CD8-positive, alpha-beta T cell (primary cell): ENCODE measurements at regions of chr17 and their contacts with region 1.

Region 1: GRCh38 chr17:30824356-30825145 is at the start of gene CRLF3:
- DNase-seq: peak; percentile 80 to 96 (median 88)
- ATAC-seq: peak; percentile 90
- H3K4me3 ChIP-seq: peak within 1 kb of the TSS; percentile 82 to 96
- H3K4me3 Mint-ChIP-seq: peak within 1 kb of the TSS; percentile 92
- H3K27ac ChIP-seq: peak within 1 kb of the TSS; percentile 79 to 87
- H3K27ac Mint-ChIP-seq: peak within 1 kb of the TSS; percentile 88
- H3K4me1 ChIP-seq: peaks cover 42% of the 10 kb centered on the region
- H3K4me1 Mint-ChIP-seq: peaks cover 42% of the 10 kb centered on the region
- H3K27me3 ChIP-seq: no peaks in the 10 kb centered on the region
- H3K27me3 Mint-ChIP-seq: no peaks in the 10 kb centered on the region
- CTCF ChIP-seq: peak; percentile 62
- total RNA-seq, gene CRLF3: 60.5 to 60.7 TPM

Region 2: GRCh38 chr17:30116661-30117551 is 707.6 kb before region 1 on chr17 and contains the start of gene NSRP1:
- CTCF ChIA-PET with region 1: no interaction called
- POLR2A ChIA-PET with region 1: no interaction called
- intact Hi-C with region 1: loop called in 1 of 2 experiments (anchors 10 kb)
- DNase-seq: peak; percentile 83 to 96 (median 92)
- ATAC-seq: peak; percentile 97
- H3K4me3 ChIP-seq: peak within 1 kb of the TSS; percentile 66 to 96
- H3K4me3 Mint-ChIP-seq: peak within 1 kb of the TSS; percentile 100
- H3K27ac ChIP-seq: peak within 1 kb of the TSS; percentile 95 to 99
- H3K27ac Mint-ChIP-seq: peak within 1 kb of the TSS; percentile 100
- H3K4me1 ChIP-seq: peaks cover 16% of the 10 kb centered on the region
- H3K4me1 Mint-ChIP-seq: peaks cover 41% of the 10 kb centered on the region
- H3K27me3 ChIP-seq: no peaks in the 10 kb centered on the region
- H3K27me3 Mint-ChIP-seq: no peaks in the 10 kb centered on the region
- CTCF ChIP-seq: no peak
- total RNA-seq, gene NSRP1: 22.4 to 23.1 TPM

Region 3: DNA sequence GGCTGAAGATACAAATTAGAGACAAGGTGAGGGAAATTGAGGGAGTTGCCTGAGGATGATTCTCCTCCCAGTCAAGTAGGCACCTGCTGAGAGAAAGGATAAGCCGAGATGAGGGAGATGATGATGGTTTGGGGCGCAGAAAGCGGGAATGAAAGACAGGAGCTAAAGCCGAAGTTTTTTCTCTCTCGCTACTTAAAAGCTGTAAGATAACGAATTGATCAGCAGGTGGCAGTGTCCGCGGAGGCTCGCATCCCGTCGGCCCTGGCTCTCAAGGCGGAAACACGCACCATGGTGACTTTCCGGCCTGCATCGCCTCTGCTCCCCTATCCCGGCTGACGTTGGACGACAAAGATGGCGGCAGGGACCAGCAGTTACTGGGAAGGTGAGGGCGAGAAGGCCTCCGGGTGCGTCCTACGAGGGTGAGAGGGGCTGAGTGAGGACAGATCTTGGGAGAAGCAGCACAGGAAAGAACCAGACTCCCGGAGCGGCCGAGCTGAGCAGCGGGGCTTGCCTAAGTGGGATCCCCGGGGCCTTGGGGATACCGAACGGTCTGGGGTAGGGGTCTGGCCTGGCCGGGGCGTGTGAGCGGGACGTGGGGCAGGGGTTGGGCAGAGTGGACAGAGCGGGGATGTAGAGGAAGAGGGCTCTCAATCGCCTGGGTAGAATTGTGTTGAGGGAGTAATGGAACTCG is 347.3 kb before region 1 on chr17 and contains the start of gene GOSR1:
- CTCF ChIA-PET with region 1: interaction called, 3 read pairs
- POLR2A ChIA-PET with region 1: no interaction called
- intact Hi-C with region 1: loop called in 1 of 2 experiments (anchors 1 kb)
- DNase-seq: peak; percentile 82 to 97 (median 92)
- ATAC-seq: peak; percentile 97
- H3K4me3 ChIP-seq: peak within 1 kb of the TSS; percentile 65 to 68
- H3K4me3 Mint-ChIP-seq: peak within 1 kb of the TSS; percentile 99
- H3K27ac ChIP-seq: peak within 1 kb of the TSS; percentile 92 to 93
- H3K27ac Mint-ChIP-seq: peak within 1 kb of the TSS; percentile 99
- H3K4me1 ChIP-seq: peaks cover 23% of the 10 kb centered on the region
- H3K4me1 Mint-ChIP-seq: peaks cover 45% of the 10 kb centered on the region
- H3K27me3 ChIP-seq: no peaks in the 10 kb centered on the region
- H3K27me3 Mint-ChIP-seq: peaks cover 4% of the 10 kb centered on the region
- CTCF ChIP-seq: peak; percentile 72
- total RNA-seq, gene GOSR1: 45.2 to 48.0 TPM

Region 4: DNA sequence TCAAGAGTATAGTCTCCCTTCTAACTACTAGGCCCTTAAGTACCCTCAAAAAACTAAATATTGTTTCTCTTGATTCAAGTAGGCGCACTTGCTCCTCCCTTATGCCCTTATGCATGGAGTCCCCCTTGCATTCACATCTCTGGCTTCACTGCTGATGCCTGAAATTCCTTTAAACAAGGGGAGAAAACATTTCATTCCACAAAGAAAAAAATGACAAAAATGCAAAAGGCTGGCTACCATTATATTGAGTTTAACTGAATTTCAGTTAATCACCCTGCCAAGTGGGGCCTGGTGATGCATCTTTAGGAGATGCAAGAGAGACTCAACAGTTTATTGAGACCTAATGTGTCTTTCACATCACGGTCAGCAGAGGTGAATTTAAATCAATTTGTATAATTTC is 35.6 kb before region 1 on chr17:
- CTCF ChIA-PET with region 1: interaction called, 10 read pairs
- POLR2A ChIA-PET with region 1: interaction called, 6 read pairs
- intact Hi-C with region 1: loop called (anchors 5 kb)
- DNase-seq: no peak
- ATAC-seq: no peak
- H3K4me3 ChIP-seq: no peak overlapping the region
- H3K4me3 Mint-ChIP-seq: no peak overlapping the region
- H3K27ac ChIP-seq: no peak overlapping the region
- H3K27ac Mint-ChIP-seq: peak overlapping the region; percentile 33
- H3K4me1 ChIP-seq: no peaks in the 10 kb centered on the region
- H3K4me1 Mint-ChIP-seq: peaks cover 12% of the 10 kb centered on the region
- H3K27me3 ChIP-seq: no peaks in the 10 kb centered on the region
- H3K27me3 Mint-ChIP-seq: no peaks in the 10 kb centered on the region
- CTCF ChIP-seq: no peak

Region 5: GRCh38 chr17:30808785-30809286 is 15.7 kb before region 1 on chr17:
- CTCF ChIA-PET with region 1: interaction called, 220 read pairs
- POLR2A ChIA-PET with region 1: interaction called, 168 read pairs
- intact Hi-C with region 1: loop called (anchors 1 kb)
- DNase-seq: peak in 8 of 9 experiments; percentile 1 to 88 (median 48)
- ATAC-seq: peak; percentile 85
- H3K4me3 ChIP-seq: peak overlapping the region; percentile 26 to 48
- H3K4me3 Mint-ChIP-seq: peak overlapping the region; percentile 83
- H3K27ac ChIP-seq: peak overlapping the region; percentile 53 to 89
- H3K27ac Mint-ChIP-seq: peak overlapping the region; percentile 99
- H3K4me1 ChIP-seq: peaks cover 63% of the 10 kb centered on the region
- H3K4me1 Mint-ChIP-seq: peaks cover 70% of the 10 kb centered on the region
- H3K27me3 ChIP-seq: no peaks in the 10 kb centered on the region
- H3K27me3 Mint-ChIP-seq: no peaks in the 10 kb centered on the region
- CTCF ChIP-seq: no peak

Region 6: GRCh38 chr17:31313982-31314784 is 489.6 kb after region 1 on chr17 and contains the start of gene EVI2B:
- CTCF ChIA-PET with region 1: no interaction called
- POLR2A ChIA-PET with region 1: no interaction called
- intact Hi-C with region 1: loop called in 1 of 2 experiments (anchors 5 kb)
- DNase-seq: peak in 3 of 9 experiments; percentile 29 to 75 (median 59)
- ATAC-seq: peak; percentile 44
- H3K4me3 ChIP-seq: peak within 1 kb of the TSS; percentile 59 to 67
- H3K4me3 Mint-ChIP-seq: peak within 1 kb of the TSS; percentile 82
- H3K27ac ChIP-seq: peak within 1 kb of the TSS; percentile 50 to 89
- H3K27ac Mint-ChIP-seq: peak within 1 kb of the TSS; percentile 90
- H3K4me1 ChIP-seq: peaks cover 40% of the 10 kb centered on the region
- H3K4me1 Mint-ChIP-seq: peaks cover 52% of the 10 kb centered on the region
- H3K27me3 ChIP-seq: no peaks in the 10 kb centered on the region
- H3K27me3 Mint-ChIP-seq: no peaks in the 10 kb centered on the region
- CTCF ChIP-seq: no peak
- total RNA-seq, gene EVI2B: 77.5 to 82.0 TPM